MCF 10A (cell line): ENCODE measurements at regions of chr2 and their contacts with region 1.

Region 1: DNA sequence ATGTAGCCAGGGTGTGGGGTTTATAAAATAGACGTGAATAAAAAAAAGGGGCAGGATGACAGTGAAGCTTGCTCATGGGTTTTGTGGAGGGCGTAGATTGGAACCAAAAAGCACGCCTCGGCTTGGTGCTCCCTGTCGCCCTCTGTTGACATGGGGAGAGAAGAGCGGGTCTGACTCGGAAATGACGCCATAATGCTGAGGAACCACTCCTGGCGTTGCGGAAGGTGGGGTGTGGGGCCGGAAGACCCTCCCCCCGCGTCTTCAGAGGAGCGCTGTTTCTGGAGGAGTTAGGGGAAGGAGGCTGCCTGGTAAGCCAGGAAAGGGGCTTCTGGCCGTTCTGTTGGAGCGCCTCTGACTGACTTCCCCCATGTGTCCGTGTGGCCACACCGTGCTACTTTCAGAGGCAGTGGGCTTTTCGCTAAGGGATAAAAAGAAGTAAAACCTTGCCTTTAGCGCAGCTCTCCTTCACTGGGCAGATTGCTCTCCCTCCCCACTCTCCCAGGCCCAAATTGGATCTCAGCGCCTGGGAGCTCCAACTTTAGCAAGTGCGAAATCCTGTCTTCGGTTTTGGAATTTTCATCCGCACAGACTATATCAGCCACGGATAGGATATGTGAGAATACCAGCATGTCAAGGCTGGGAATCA is 42.8 kb downstream of the PLEKHA3 start:
- DNase-seq: peak; percentile 92
- H3K4me3 Mint-ChIP-seq: peak overlapping the region; percentile 90
- H3K27ac Mint-ChIP-seq: peak overlapping the region; percentile 95
- H3K4me1 Mint-ChIP-seq: no peaks in the 10 kb centered on the region
- H3K27me3 Mint-ChIP-seq: no peaks in the 10 kb centered on the region
- CTCF ChIP-seq: peak; percentile 87

Region 2: DNA sequence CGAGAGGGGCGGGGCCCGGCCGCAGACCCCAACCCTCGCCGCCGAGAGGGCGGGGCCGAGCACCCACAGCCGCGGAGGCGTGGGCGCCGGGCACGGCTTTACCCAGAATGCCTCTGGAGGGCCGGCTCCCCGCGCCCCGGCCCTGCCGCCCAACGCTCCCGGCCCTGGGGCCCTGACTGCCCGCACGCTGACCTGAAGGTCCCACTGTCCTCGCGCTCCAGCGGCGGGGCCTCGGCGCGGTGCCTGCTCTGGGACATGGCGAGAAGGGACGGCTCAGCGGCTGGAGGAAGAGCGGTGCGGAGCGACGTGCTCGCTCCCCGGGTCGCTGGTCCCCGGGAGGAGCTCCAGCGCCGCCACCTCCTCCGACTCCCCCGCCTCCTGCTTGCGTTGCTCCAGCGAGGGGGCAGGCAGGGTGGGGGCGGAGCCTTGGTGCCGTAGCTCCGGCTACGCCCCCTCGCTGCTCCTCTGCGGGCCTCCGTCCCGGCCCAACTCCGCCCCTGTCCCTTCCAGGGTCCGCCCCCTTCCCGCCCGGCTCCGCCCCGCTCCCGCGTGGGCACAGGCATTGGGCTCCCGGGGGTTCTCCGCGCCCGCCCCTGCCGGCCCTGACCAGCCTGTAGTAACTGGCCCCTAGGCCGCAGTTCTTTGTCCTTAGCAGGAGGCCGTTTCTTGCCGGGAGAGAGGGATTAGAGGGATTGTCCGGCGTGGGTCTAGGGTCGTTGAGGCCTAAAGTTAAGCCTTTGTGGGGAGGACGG is 72.1 kb before region 1 on chr2 and contains the starts of genes PJVK and PRKRA:
- CTCF ChIA-PET with region 1: no interaction called
- POLR2A ChIA-PET with region 1: interaction called, 19 read pairs
- intact Hi-C with region 1: loop called (anchors 1 kb)
- DNase-seq: peak; percentile 95
- H3K4me3 Mint-ChIP-seq: peak within 1 kb of the TSS; percentile 88
- H3K27ac Mint-ChIP-seq: peak within 1 kb of the TSS; percentile 100
- H3K4me1 Mint-ChIP-seq: peaks cover 11% of the 10 kb centered on the region
- H3K27me3 Mint-ChIP-seq: no peaks in the 10 kb centered on the region
- CTCF ChIP-seq: no peak
- total RNA-seq, gene PJVK: 7.4 and 10.4 TPM in 2 replicates
- total RNA-seq, gene PRKRA: 51.4 and 58.9 TPM in 2 replicates

Region 3: DNA sequence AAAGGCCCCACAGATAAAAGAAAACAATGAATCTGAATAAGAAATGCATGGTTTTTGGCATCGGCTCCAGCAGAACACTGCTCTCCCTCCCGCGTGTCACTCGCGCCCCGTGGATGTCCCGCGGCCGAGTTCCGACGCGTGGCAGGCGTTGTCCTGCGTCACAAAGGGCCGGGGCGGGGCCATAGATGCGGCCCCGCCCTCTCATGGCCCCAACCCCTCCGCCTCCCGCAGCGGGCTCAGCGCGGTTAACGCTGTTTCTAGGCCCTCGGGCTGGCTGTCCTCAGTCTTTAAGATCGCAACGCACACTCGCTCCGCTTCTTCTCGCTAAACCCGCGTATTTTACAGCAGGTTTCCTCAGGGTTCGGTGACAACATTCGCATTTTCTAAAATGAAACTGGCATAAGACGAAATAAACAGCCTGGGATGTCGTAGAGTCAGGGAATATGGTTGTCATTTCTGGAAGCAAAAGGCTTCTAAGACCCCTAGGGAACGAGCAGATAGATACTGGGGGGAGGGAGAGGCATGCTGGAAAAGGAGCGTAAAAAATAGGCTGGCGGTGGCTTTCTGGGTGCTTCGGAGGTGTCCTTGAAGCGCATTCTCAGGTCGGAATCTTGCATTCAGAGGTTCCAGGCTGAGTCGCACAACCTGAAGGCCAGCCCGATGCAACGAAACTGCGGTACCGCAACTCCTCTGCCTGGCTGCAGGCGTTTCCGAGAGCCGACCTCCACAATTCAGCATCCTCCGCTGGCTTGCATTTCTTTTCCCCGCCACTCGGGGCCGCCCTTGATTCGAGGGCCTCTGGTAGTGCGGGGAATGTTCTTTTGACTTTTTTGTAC is 44.4 kb before region 1 on chr2 and contains the start of gene FKBP7:
- CTCF ChIA-PET with region 1: interaction called, 6 read pairs
- POLR2A ChIA-PET with region 1: interaction called, 24 read pairs
- intact Hi-C with region 1: loop called (anchors 1 kb)
- DNase-seq: peak; percentile 82
- H3K4me3 Mint-ChIP-seq: peak within 1 kb of the TSS; percentile 96
- H3K27ac Mint-ChIP-seq: peak within 1 kb of the TSS; percentile 99
- H3K4me1 Mint-ChIP-seq: peaks cover 19% of the 10 kb centered on the region
- H3K27me3 Mint-ChIP-seq: no peaks in the 10 kb centered on the region
- CTCF ChIP-seq: peak; percentile 71
- total RNA-seq, gene FKBP7: 5.8 and 8.4 TPM in 2 replicates

Region 4: DNA sequence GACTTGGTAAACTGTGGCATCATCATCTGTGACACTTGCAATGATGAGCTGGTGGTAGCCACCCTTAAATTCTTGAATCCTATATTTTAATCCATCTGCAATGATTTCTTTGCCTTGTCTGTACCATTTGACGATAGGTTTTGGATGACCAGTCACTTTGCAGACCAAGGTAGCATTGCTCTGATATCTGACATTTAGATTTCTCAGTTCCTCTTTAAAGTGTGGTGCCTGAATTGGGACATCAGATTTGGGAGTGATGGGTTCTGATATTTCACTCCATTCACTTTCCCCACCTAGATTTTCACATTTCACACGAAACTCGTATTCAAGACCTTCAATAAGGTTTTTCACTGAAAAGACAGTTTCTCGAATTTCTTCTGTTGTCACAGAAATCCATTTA is 13.0 kb after region 1 on chr2:
- CTCF ChIA-PET with region 1: interaction called, 12 read pairs
- POLR2A ChIA-PET with region 1: interaction called, 3 read pairs
- intact Hi-C with region 1: no loop called
- DNase-seq: no peak
- H3K4me3 Mint-ChIP-seq: no peak overlapping the region
- H3K27ac Mint-ChIP-seq: no peak overlapping the region
- H3K4me1 Mint-ChIP-seq: peaks cover 3% of the 10 kb centered on the region
- H3K27me3 Mint-ChIP-seq: no peaks in the 10 kb centered on the region
- CTCF ChIP-seq: no peak

Region 5: GRCh38 chr2:178650554-178650953 is 127.5 kb after region 1 on chr2:
- CTCF ChIA-PET with region 1: no interaction called
- POLR2A ChIA-PET with region 1: no interaction called
- intact Hi-C with region 1: no loop called
- DNase-seq: no peak
- H3K4me3 Mint-ChIP-seq: no peak overlapping the region
- H3K27ac Mint-ChIP-seq: no peak overlapping the region
- H3K4me1 Mint-ChIP-seq: no peaks in the 10 kb centered on the region
- H3K27me3 Mint-ChIP-seq: peaks cover 22% of the 10 kb centered on the region
- CTCF ChIP-seq: no peak

Region 6: DNA sequence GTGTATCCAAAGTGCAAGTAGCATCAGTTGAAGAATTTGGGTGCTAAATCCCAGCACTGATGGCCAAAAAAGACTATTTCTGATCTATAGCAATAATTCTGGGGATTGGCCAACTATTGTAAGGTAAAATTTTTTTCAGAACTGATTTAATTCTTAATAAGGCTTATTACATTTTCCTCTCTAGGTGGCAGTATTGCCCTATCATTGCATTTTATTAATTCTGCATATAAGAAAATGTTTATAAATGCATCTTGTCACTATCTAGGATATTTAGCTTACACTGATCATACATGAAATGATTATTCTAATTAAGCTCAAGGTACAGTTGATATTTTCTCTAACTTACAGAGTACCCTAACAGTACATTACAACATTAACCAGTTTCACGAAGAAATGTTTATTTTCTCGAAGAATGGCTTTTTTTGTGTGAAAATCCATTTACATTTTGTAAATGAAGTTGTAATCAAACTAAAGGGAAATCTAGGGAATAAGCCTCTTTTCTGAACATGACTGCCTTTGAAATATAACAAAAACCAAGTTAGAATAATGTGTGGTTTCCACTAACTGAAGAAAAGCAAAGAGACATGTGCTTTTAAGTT is 273.1 kb after region 1 on chr2:
- CTCF ChIA-PET with region 1: no interaction called
- POLR2A ChIA-PET with region 1: no interaction called
- intact Hi-C with region 1: no loop called
- DNase-seq: peak; percentile 54
- H3K4me3 Mint-ChIP-seq: no peak overlapping the region
- H3K27ac Mint-ChIP-seq: no peak overlapping the region
- H3K4me1 Mint-ChIP-seq: no peaks in the 10 kb centered on the region
- H3K27me3 Mint-ChIP-seq: peaks cover 23% of the 10 kb centered on the region
- CTCF ChIP-seq: peak; percentile 62